HEK293 (cell line): ENCODE measurements at regions of chr5 and their contacts with region 1.

Region 1: GRCh38 chr5:157855404-157855994 is 3.4 kb downstream of the CLINT1 start:
- H3K4me3 ChIP-seq: no peak overlapping the region
- H3K27ac ChIP-seq: no peak overlapping the region
- H3K4me1 ChIP-seq: peaks cover 4% of the 10 kb centered on the region; the same call in 1 of the 2 replicates
- CTCF ChIP-seq: peak; percentile 37

Region 2: DNA sequence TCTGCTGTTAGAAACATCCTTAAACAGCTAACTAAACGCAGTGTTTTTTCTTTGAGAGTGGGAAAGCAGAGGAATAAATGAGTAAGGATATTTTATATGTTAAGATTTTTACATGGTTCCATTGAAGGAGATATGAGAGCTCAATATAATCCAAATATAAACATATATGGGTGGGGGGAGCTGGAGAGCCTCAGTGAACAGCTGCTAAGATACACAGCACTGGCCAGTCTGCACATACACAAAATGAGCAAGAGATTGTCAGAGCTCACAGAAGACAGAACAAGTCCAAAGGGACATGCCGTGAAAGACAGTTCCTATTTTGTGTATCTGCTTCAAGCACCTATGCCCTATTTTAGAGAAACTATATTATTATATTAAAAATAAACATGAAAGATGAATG is 43.4 kb before region 1 on chr5:
- CTCF ChIA-PET with region 1: interaction called, 10 read pairs
- POLR2A ChIA-PET with region 1: no interaction called
- H3K4me3 ChIP-seq: no peak overlapping the region
- H3K27ac ChIP-seq: no peak overlapping the region
- H3K4me1 ChIP-seq: no peaks in the 10 kb centered on the region
- CTCF ChIP-seq: no peak

Region 3: GRCh38 chr5:157828944-157829632 is 26.4 kb before region 1 on chr5:
- CTCF ChIA-PET with region 1: interaction called, 14 read pairs
- POLR2A ChIA-PET with region 1: no interaction called
- H3K4me3 ChIP-seq: no peak overlapping the region
- H3K27ac ChIP-seq: no peak overlapping the region
- H3K4me1 ChIP-seq: peaks cover 16% of the 10 kb centered on the region
- CTCF ChIP-seq: no peak

Region 4: DNA sequence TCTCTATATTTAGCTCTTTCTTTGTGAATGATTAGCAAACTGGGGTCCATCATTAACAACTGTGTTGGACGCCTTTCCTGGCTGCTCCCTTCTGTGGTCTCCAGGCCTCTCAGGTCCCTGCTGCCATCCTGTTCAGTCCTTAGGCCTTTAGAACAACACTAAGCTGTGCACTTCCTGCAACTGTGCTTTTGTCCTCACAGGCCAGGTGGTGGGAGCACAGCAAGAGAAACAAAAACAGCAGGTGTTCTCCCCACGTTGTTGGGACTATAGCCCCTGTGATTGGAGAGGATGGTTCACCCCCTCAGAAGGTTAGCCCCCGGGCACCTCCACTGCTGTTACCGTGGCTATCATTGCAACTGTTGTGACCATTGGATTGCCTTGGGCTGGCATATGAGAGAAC is 45.1 kb after region 1 on chr5:
- CTCF ChIA-PET with region 1: no interaction called
- POLR2A ChIA-PET with region 1: no interaction called
- H3K4me3 ChIP-seq: no peak overlapping the region
- H3K27ac ChIP-seq: no peak overlapping the region
- H3K4me1 ChIP-seq: no peaks in the 10 kb centered on the region
- CTCF ChIP-seq: no peak

Region 5: GRCh38 chr5:157917899-157918809 is 62.7 kb after region 1 on chr5:
- CTCF ChIA-PET with region 1: interaction called, 12 read pairs
- POLR2A ChIA-PET with region 1: no interaction called
- H3K4me3 ChIP-seq: no peak overlapping the region
- H3K27ac ChIP-seq: no peak overlapping the region
- H3K4me1 ChIP-seq: peaks cover 16% of the 10 kb centered on the region
- CTCF ChIP-seq: peak; percentile 47; the same call in 1 of the 2 replicates

Region 6: GRCh38 chr5:157948738-157949410 is 93.4 kb after region 1 on chr5:
- CTCF ChIA-PET with region 1: interaction called, 20 read pairs
- POLR2A ChIA-PET with region 1: interaction called, 4 read pairs
- H3K4me3 ChIP-seq: no peak overlapping the region
- H3K27ac ChIP-seq: no peak overlapping the region
- H3K4me1 ChIP-seq: peaks cover 3% of the 10 kb centered on the region; the same call in 1 of the 2 replicates
- CTCF ChIP-seq: peak; percentile 71

Region 7: DNA sequence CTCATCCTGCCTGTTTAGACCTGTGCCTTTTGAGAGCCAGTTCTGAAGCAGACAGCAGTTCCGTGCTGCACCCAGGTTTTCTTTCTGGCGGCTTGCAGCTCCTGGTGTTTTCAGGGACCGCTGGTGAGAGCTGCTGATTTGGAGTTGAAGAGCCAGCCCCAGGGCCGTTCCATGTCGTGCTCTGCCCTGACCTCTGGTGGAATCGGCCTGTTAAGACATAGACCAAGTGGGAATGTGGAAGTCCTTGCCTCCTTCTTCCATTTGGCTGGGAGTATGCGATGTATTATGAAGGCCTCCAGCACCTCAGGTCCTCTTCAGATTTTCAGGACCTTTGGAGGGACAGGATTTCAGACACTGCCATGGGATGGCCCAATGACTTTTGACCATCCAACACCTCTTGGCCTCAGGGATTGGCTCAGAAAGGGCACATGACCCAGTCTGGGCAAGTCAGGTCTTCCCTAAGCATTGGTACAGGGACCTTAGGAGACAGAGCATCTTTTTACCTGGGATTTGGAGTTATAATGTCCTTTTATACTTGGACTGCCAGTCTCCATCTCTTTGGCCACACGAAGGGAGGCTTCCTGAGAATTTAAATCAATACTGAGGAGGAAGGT is 139.5 kb after region 1 on chr5:
- CTCF ChIA-PET with region 1: interaction called, 14 read pairs
- POLR2A ChIA-PET with region 1: no interaction called
- H3K4me3 ChIP-seq: no peak overlapping the region
- H3K27ac ChIP-seq: no peak overlapping the region
- H3K4me1 ChIP-seq: 0 out of 2 replicates have a peak, but pooled peaks cover 2% of the 10 kb centered on the region
- CTCF ChIP-seq: peak; percentile 55